B cell (primary cell): ENCODE measurements at regions of chr17 and their contacts with region 1.

Region 1: DNA sequence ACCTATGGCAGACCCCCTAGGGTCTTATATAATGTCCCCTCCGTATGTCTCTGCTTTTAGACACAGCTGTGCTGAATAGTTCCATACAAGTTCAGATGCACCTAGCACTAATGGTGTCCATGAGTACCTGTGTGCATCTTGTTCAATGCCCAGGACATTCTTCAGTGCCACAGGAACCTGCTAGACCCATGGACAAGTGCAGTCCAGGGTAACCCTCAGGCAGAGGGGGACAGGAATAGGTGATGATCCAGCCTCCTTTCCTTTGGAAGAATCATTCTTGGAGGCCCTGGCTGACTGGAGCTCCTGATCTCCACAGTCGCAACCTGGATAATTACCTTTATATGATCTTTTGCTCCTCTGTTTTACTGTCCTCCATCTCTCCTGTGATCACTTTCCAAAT is 28.4 kb upstream of the PPM1D start:
- DNase-seq: no peak
- ATAC-seq: no peak
- H3K4me3 ChIP-seq: no peak overlapping the region
- H3K4me3 Mint-ChIP-seq: no peak overlapping the region
- H3K27ac ChIP-seq: no peak overlapping the region
- H3K27ac Mint-ChIP-seq: no peak overlapping the region
- H3K4me1 ChIP-seq: no peaks in the 10 kb centered on the region
- H3K4me1 Mint-ChIP-seq: no peaks in the 10 kb centered on the region
- H3K27me3 ChIP-seq: no peaks in the 10 kb centered on the region
- H3K27me3 Mint-ChIP-seq: peaks cover 17% of the 10 kb centered on the region
- CTCF ChIP-seq: no peak

Region 2: DNA sequence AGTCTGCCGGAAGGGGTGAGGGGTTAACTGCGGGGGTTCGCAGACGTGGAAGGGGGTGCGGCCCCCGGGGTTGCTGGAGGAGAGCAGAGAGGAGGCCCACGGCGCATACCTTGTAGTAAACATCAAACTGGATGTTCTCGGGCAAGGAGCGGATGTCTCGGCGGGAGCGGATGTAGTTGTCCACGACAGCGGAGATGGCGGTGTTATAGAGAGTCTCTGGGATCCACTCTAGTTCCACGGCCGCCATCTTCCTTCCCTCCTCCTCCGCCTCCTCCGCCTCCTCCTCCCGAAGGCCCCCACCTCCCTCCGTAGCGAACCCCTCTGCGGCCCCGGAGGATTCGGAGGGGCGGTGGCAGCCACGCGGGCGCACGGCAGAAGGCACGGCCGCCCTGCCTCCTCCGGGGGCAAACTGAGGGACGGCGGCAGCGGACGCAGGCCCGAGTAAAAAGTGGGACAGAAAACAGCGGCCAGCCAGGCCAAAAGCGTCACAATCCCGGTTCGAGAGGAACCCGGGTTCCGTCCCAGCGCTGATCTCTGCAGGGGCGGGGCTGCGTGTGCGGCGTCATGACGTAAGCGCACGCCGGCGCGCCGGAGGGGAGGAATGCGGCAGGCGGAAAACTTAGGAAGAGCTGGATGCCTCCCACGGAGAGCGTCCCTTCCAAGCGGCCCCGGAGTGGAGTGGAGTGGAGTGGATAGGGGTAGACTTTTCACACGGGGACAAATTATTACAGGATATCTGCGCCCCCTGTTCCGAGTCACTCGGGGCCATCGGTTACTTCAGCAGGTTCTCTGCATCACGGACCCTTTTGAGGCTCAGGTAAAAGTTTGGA is 45.7 kb before region 1 on chr17 and contains the start of gene APPBP2:
- CTCF ChIA-PET with region 1: interaction called, 5 read pairs
- POLR2A ChIA-PET with region 1: no interaction called
- intact Hi-C with region 1: loop called (anchors 2 kb)
- DNase-seq: peak; percentile 87
- ATAC-seq: peak; percentile 88
- H3K4me3 ChIP-seq: peak within 1 kb of the TSS; percentile 66 to 98 (median 96)
- H3K4me3 Mint-ChIP-seq: peak within 1 kb of the TSS; percentile 100
- H3K27ac ChIP-seq: peak within 1 kb of the TSS; percentile 88 to 94
- H3K27ac Mint-ChIP-seq: peak within 1 kb of the TSS; percentile 98
- H3K4me1 ChIP-seq: peaks cover 17 to 21% of the 10 kb centered on the region in 2 donors
- H3K4me1 Mint-ChIP-seq: peaks cover 45% of the 10 kb centered on the region
- H3K27me3 ChIP-seq: no peaks in the 10 kb centered on the region
- H3K27me3 Mint-ChIP-seq: no peaks in the 10 kb centered on the region
- CTCF ChIP-seq: no peak
- total RNA-seq, gene APPBP2: 38.8 and 44.1 TPM in 2 replicates

Region 3: DNA sequence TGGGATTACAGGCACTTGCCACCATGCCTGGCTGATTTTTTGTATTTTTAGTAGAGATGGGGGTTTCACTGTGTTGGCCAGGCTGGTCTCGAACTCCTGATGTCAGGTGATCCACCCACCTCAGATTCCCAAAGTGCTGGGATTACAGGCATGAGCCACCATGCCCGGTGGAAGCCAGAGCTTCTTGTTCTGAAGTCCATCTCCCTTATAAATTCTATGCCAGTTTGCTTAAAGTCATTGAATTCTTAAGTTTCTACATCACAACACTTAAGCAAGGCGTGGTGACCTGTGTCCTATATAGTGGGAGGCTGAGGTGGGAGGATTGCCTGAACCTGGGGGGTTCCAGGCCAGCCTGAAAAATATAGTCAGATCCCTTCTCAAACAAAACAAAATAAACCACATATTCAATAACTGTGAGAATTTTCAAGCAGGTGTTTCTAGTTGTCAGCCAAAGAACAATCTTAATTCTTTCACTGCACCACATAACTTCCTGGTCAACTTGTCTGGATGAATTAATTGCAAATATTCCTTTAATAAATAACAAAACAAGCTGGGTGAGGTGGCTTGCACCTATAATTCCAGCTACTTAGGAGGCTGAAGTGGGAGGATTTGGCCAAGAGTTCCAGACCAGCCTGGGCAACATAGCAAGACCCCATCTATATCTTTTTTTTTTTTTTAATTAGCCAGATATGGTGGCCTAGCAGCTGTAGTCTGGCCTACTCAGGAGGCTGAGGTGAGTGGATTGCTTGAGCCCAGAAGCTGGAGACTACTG is 11.3 kb after region 1 on chr17:
- CTCF ChIA-PET with region 1: interaction called, 13 read pairs
- POLR2A ChIA-PET with region 1: no interaction called
- intact Hi-C with region 1: no loop called
- DNase-seq: no peak
- ATAC-seq: no peak
- H3K4me3 ChIP-seq: no peak overlapping the region
- H3K4me3 Mint-ChIP-seq: no peak overlapping the region
- H3K27ac ChIP-seq: no peak overlapping the region
- H3K27ac Mint-ChIP-seq: no peak overlapping the region
- H3K4me1 ChIP-seq: no peaks in the 10 kb centered on the region
- H3K4me1 Mint-ChIP-seq: no peaks in the 10 kb centered on the region
- H3K27me3 ChIP-seq: peaks cover 0 to 4% (median 2%) of the 10 kb centered on the region in 4 experiments
- H3K27me3 Mint-ChIP-seq: peaks cover 9% of the 10 kb centered on the region
- CTCF ChIP-seq: no peak